B cell (primary cell): ENCODE measurements at regions of chr3 and their contacts with region 1.

Region 1: DNA sequence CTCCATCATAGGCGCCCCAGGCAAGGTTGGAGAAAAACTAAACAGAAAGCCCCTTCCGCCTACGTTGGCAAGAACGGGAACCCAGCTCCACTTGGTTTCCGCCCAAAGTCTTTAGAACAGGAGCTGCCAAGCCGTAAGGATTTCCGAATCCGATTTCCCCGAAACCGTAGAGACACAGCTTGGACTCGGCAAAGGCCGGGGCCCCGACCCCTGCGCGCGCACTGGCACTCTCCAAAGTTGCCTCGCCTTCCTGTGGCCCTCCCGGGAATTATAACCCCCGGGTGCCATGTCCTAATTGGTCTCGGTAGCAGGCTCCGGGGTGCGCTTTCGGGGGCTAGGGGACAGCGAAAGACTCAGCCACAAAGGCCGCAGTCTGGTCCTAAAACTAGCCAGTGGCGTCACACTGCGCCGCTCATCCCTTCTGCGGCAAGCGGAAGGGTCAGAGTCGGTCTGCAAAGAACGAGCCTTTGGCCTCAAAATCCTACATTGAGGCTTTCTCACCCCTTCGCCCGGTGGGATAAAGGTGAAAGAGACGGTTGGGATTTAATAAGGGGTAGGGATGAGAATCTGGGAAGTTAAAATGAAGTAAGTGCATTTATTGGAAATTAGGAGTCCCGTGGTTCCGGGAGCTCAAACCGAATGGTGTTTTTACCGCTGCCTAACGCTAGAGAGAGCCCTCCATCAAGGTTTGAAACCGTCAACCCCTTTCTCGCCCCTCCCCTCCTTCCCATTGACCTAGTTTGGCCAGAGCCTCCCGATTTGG is 6.8 kb downstream of the BCL6 start:
- DNase-seq: peak; percentile 81
- ATAC-seq: peak; percentile 46
- H3K4me3 ChIP-seq: peak overlapping the region; percentile 66 to 93 (median 84)
- H3K4me3 Mint-ChIP-seq: peak overlapping the region; percentile 97
- H3K27ac ChIP-seq: peak overlapping the region in 1 of 2 donors; percentile 66
- H3K27ac Mint-ChIP-seq: peak overlapping the region; percentile 75
- H3K4me1 ChIP-seq: peaks cover 34 to 57% of the 10 kb centered on the region in 2 donors
- H3K4me1 Mint-ChIP-seq: peaks cover 62% of the 10 kb centered on the region
- H3K27me3 ChIP-seq: no peaks in the 10 kb centered on the region
- H3K27me3 Mint-ChIP-seq: no peaks in the 10 kb centered on the region
- CTCF ChIP-seq: peak; percentile 82

Region 2: GRCh38 chr3:188061133-188061532 is 322.6 kb after region 1 on chr3:
- CTCF ChIA-PET with region 1: interaction called, 4 read pairs
- POLR2A ChIA-PET with region 1: no interaction called
- intact Hi-C with region 1: loop called (anchors 2 kb)
- DNase-seq: peak; percentile 46
- ATAC-seq: peak; percentile 87
- H3K4me3 ChIP-seq: no peak overlapping the region
- H3K4me3 Mint-ChIP-seq: no peak overlapping the region
- H3K27ac ChIP-seq: no peak overlapping the region
- H3K27ac Mint-ChIP-seq: no peak overlapping the region
- H3K4me1 ChIP-seq: no peaks in the 10 kb centered on the region
- H3K4me1 Mint-ChIP-seq: peaks cover 3% of the 10 kb centered on the region
- H3K27me3 ChIP-seq: no peaks in the 10 kb centered on the region
- H3K27me3 Mint-ChIP-seq: no peaks in the 10 kb centered on the region
- CTCF ChIP-seq: no peak

Region 3: GRCh38 chr3:188309437-188310269 is 571.1 kb after region 1 on chr3:
- CTCF ChIA-PET with region 1: interaction called, 7 read pairs
- POLR2A ChIA-PET with region 1: no interaction called
- intact Hi-C with region 1: loop called (anchors 5 kb)
- DNase-seq: peak; percentile 39
- ATAC-seq: peak; percentile 51
- H3K4me3 ChIP-seq: peak overlapping the region in 2 of 5 experiments; percentile 1 to 11
- H3K4me3 Mint-ChIP-seq: peak overlapping the region; percentile 78
- H3K27ac ChIP-seq: peak overlapping the region in 1 of 2 donors; percentile 42
- H3K27ac Mint-ChIP-seq: peak overlapping the region; percentile 46
- H3K4me1 ChIP-seq: peaks cover 18 to 19% of the 10 kb centered on the region in 2 donors
- H3K4me1 Mint-ChIP-seq: peaks cover 33% of the 10 kb centered on the region
- H3K27me3 ChIP-seq: no peaks in the 10 kb centered on the region
- H3K27me3 Mint-ChIP-seq: no peaks in the 10 kb centered on the region
- CTCF ChIP-seq: no peak

Region 4: GRCh38 chr3:188446014-188446413 is 707.5 kb after region 1 on chr3:
- CTCF ChIA-PET with region 1: interaction called, 11 read pairs
- POLR2A ChIA-PET with region 1: no interaction called
- intact Hi-C with region 1: no loop called
- DNase-seq: peak; percentile 56
- ATAC-seq: peak; percentile 62
- H3K4me3 ChIP-seq: peak overlapping the region in 1 of 5 experiments; percentile 20
- H3K4me3 Mint-ChIP-seq: peak overlapping the region; percentile 78
- H3K27ac ChIP-seq: peak overlapping the region; percentile 78 to 88
- H3K27ac Mint-ChIP-seq: peak overlapping the region; percentile 94
- H3K4me1 ChIP-seq: peaks cover 59 to 60% of the 10 kb centered on the region in 2 donors
- H3K4me1 Mint-ChIP-seq: peaks cover 73% of the 10 kb centered on the region
- H3K27me3 ChIP-seq: no peaks in the 10 kb centered on the region
- H3K27me3 Mint-ChIP-seq: no peaks in the 10 kb centered on the region
- CTCF ChIP-seq: no peak

Region 5: GRCh38 chr3:188680189-188680588 is 941.7 kb after region 1 on chr3:
- CTCF ChIA-PET with region 1: interaction called, 16 read pairs
- POLR2A ChIA-PET with region 1: no interaction called
- intact Hi-C with region 1: loop called (anchors 5 kb)
- DNase-seq: no peak
- ATAC-seq: no peak
- H3K4me3 ChIP-seq: no peak overlapping the region
- H3K4me3 Mint-ChIP-seq: no peak overlapping the region
- H3K27ac ChIP-seq: no peak overlapping the region
- H3K27ac Mint-ChIP-seq: no peak overlapping the region
- H3K4me1 ChIP-seq: no peaks in the 10 kb centered on the region
- H3K4me1 Mint-ChIP-seq: peaks cover 26% of the 10 kb centered on the region
- H3K27me3 ChIP-seq: no peaks in the 10 kb centered on the region
- H3K27me3 Mint-ChIP-seq: no peaks in the 10 kb centered on the region
- CTCF ChIP-seq: no peak

Region 6: DNA sequence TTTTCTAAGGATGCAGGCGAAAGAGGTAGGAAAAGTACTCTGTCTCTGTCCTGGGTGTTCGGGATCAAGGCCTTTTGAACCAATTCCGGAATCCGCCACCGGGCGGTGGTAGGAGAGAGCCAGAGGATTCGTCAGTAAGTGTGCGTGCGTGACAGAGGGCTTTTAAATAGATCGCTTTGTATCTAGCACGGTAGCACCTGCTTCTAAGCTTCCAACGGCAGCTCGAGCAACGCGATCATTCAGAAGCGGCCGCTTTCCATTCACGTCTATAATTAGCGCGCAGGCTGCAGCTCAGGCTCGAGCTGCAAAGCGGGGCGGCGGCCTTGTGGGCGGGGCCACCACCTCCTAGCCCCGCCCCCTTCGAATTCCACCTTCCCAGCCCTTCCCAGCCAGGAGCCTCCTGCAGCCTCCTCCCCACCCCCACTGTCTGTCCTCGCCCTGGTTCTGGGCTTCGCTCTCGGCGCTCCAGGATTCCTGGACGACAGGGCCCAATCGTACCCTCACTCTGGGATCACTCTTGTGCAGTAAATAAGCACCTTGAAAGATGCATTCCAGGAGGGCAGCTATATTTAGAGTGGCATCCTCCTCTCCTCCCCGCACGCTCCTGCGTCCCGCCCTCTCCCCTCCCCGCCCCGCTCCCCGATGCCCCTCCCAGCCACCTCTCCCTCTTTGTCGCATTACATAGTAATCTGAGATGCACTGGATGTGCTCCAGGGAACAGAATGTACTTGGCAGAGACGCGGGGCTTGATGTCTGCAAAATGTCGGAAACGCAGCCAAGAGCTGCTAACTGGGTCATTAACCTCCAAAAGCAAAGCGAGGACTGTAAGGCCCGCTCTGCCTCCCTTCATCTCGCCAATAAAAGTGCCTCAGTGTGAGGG is 1209.1 kb after region 1 on chr3:
- CTCF ChIA-PET with region 1: interaction called, 1,008 read pairs
- POLR2A ChIA-PET with region 1: interaction called, 3 read pairs
- intact Hi-C with region 1: no loop called
- DNase-seq: peak; percentile 37
- ATAC-seq: peak; percentile 36
- H3K4me3 ChIP-seq: peak overlapping the region; percentile 4 to 50 (median 30)
- H3K4me3 Mint-ChIP-seq: peak overlapping the region; percentile 52
- H3K27ac ChIP-seq: no peak overlapping the region
- H3K27ac Mint-ChIP-seq: no peak overlapping the region
- H3K4me1 ChIP-seq: peaks cover 9 to 13% of the 10 kb centered on the region in 2 donors
- H3K4me1 Mint-ChIP-seq: peaks cover 10% of the 10 kb centered on the region
- H3K27me3 ChIP-seq: peaks cover 0 to 22% (median 8%) of the 10 kb centered on the region in 4 experiments
- H3K27me3 Mint-ChIP-seq: peaks cover 15% of the 10 kb centered on the region
- CTCF ChIP-seq: no peak